AG04449 (cell line): ENCODE measurements at regions of chr15 and their contacts with region 1.

Region 1: DNA sequence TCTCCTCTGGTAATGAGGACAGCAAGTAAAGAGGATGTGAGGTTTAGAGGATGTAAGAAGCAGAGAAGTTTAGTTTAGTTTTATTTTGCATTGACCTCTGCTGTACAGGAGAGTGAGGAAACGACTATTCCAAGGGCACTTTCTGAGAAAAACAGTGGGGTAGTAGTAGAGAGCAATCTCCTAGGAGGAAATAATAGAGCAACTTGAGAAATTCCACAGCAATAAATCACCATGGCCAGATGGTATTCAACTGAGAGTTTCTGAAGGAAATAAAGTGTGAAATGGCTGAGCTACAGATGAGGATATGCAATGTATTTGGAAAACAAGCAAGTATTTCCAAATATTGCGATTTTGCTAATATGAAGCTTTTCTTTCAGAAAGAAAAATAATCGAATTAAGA is 118.9 kb downstream of the DPH6 start:
- DNase-seq: no peak
- H3K4me3 ChIP-seq: no peak overlapping the region
- CTCF ChIP-seq: no peak

Region 2: GRCh38 chr15:35437157-35437556 is 10.1 kb after region 1 on chr15:
- CTCF ChIA-PET with region 1: interaction called, 55 read pairs
- POLR2A ChIA-PET with region 1: no interaction called
- DNase-seq: no peak
- H3K4me3 ChIP-seq: no peak overlapping the region
- CTCF ChIP-seq: no peak